SK-N-SH (cell line): ENCODE measurements at regions of chr6 and their contacts with region 1.

Region 1: DNA sequence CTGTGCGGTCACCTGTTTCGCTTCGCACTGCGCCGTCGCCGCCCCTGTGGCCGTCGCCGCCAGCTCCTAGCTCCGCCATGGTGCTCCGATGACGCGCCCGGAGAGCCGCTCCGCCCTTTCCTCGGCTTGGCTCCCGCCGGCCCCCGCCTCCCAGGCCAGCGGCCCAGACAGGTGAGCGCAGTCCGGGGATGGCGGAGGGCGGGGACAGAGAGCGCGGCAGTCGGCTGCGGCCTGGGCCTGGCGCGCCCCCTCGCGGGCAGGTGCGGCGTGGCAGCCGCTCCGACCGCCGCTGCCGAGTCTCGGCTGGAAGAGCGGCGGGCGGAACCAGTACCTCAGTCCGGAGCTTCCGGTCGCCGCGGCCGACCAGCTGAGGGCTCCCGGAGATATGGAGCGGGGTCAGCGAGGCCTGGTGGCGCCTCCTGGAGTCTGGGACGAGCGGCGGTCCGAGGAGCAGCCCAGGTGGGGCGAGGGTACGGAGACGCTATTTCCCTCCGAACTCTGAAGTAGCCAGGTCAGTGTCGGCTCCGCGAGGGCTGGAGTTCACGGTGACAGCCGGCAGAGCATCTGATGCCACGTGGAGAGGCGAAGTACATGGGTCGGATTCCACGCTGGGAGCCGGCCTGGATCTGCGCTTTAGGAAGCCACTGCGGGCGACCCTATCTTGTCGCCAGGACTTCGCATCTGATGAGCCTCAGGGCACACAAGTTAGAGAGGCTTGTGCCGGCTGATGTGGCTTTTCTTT is at the start of gene MAP7:
- DNase-seq: peak; percentile 88
- H3K4me3 ChIP-seq: peak within 1 kb of the TSS; percentile 70 to 77
- H3K27ac ChIP-seq: peak within 1 kb of the TSS in 1 of 2 experiments; percentile 55; a peak in 2 of 4 replicates
- H3K4me1 ChIP-seq: peaks cover 0 to 16% of the 10 kb centered on the region in 2 experiments; a peak in 2 of 4 replicates
- H3K27me3 ChIP-seq: peaks cover 12% of the 10 kb centered on the region; the same call in 1 of the 2 replicates
- CTCF ChIP-seq: peak; percentile 69
- EP300 ChIP-seq: no peak
- RAD21 ChIP-seq: peak; percentile 54
- polyA plus RNA-seq, gene MAP7: 0.76 and 0.97 TPM in 2 replicates

Region 2: GRCh38 chr6:136289579-136290409 is 260.7 kb before region 1 on chr6 and contains the start of gene BCLAF1:
- CTCF ChIA-PET with region 1: interaction called, 10 read pairs
- POLR2A ChIA-PET with region 1: interaction called, 9 read pairs
- DNase-seq: peak; percentile 92
- H3K4me3 ChIP-seq: peak within 1 kb of the TSS; percentile 93 to 98
- H3K27ac ChIP-seq: peak within 1 kb of the TSS; percentile 100
- H3K4me1 ChIP-seq: peaks cover 5 to 20% of the 10 kb centered on the region in 2 experiments; a peak in 3 of 4 replicates
- H3K27me3 ChIP-seq: no peaks in the 10 kb centered on the region
- CTCF ChIP-seq: no peak
- EP300 ChIP-seq: no peak
- RAD21 ChIP-seq: no peak
- polyA plus RNA-seq, gene BCLAF1: 21.9 and 30.4 TPM in 2 replicates

Region 3: GRCh38 chr6:136317021-136317694 is 233.3 kb before region 1 on chr6:
- CTCF ChIA-PET with region 1: interaction called, 10 read pairs
- POLR2A ChIA-PET with region 1: no interaction called
- DNase-seq: peak; percentile 53
- H3K4me3 ChIP-seq: peak overlapping the region in 1 of 2 experiments; percentile 39; a peak in 1 of 4 replicates
- H3K27ac ChIP-seq: no peak overlapping the region
- H3K4me1 ChIP-seq: no peaks in the 10 kb centered on the region
- H3K27me3 ChIP-seq: no peaks in the 10 kb centered on the region; the same call in 1 of the 2 replicates
- CTCF ChIP-seq: peak; percentile 76
- EP300 ChIP-seq: no peak
- RAD21 ChIP-seq: peak; percentile 95

Region 4: DNA sequence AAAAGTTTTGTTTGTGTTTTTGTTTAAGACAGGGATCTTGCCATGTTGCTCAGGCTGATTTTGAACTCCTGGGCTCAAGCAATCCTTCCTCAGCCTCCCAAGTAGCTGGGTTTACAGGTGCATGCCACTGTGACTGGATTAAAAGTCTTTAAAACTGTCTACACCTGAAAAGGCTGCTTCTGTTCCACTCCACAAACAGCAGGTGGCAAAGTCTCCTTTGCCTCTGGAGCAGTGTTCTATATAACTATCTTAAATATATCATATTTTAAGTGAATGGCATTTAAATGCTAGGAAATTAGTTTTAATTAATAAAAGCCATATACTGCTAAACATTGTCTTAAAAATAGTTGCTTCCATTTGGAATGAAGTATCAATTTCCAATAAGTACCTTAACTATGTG is 171.6 kb before region 1 on chr6:
- CTCF ChIA-PET with region 1: interaction called, 17 read pairs
- POLR2A ChIA-PET with region 1: no interaction called
- DNase-seq: no peak
- H3K4me3 ChIP-seq: no peak overlapping the region
- H3K27ac ChIP-seq: no peak overlapping the region
- H3K4me1 ChIP-seq: no peaks in the 10 kb centered on the region
- H3K27me3 ChIP-seq: no peaks in the 10 kb centered on the region
- CTCF ChIP-seq: peak; percentile 23
- EP300 ChIP-seq: no peak
- RAD21 ChIP-seq: peak; percentile 62

Region 5: DNA sequence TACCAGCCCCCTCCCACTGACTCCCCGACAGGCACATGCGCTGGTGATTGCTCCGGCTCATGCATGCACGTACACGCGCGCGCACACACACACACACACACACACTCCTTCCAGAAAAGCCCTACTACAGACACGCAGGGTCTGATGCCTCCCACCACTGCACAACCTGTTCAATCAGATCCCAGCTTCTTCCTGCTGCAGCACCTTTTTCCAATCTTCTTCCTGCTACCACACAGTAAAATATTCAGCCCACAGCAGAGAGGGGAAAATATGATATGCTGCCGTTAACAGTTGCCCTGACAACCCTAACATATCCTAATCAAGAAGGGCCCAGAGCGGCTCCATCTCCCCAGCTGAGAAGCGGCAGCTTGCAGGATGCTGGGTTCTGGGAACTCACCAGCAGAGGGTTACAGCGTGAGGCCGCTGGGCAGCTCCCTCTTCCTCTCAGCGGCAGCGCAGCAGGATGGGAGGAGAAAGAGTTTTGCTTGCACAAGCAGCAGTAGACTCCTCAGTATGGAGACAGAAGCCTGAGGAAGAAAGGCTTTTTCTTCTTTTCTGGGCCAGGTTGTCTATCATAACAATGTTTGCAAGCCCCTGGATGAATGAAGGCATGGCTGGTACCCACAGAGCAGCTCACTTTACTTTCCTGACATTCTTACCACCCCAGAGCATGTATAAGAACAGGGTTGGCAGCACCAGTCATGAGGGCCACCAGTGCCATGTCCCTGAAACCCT is 24.1 kb before region 1 on chr6:
- CTCF ChIA-PET with region 1: interaction called, 51 read pairs
- POLR2A ChIA-PET with region 1: no interaction called
- DNase-seq: peak; percentile 76
- H3K4me3 ChIP-seq: peak overlapping the region in 1 of 2 experiments; percentile 31; a peak in 2 of 4 replicates
- H3K27ac ChIP-seq: peak overlapping the region in 1 of 2 experiments; percentile 94; a peak in 2 of 4 replicates
- H3K4me1 ChIP-seq: peaks cover 0 to 33% of the 10 kb centered on the region in 2 experiments; a peak in 2 of 4 replicates
- H3K27me3 ChIP-seq: no peaks in the 10 kb centered on the region
- CTCF ChIP-seq: peak; percentile 41
- EP300 ChIP-seq: no peak
- RAD21 ChIP-seq: peak; percentile 53

Region 6: GRCh38 chr6:136566007-136566496 is 15.6 kb after region 1 on chr6:
- CTCF ChIA-PET with region 1: interaction called, 34 read pairs
- POLR2A ChIA-PET with region 1: no interaction called
- DNase-seq: no peak
- H3K4me3 ChIP-seq: no peak overlapping the region
- H3K27ac ChIP-seq: no peak overlapping the region
- H3K4me1 ChIP-seq: peaks cover 0 to 6% of the 10 kb centered on the region in 2 experiments; a peak in 2 of 4 replicates
- H3K27me3 ChIP-seq: no peaks in the 10 kb centered on the region
- CTCF ChIP-seq: no peak
- EP300 ChIP-seq: no peak
- RAD21 ChIP-seq: no peak

Region 7: GRCh38 chr6:136831873-136832562 is 281.5 kb after region 1 on chr6:
- CTCF ChIA-PET with region 1: no interaction called
- POLR2A ChIA-PET with region 1: no interaction called
- DNase-seq: no peak
- H3K4me3 ChIP-seq: no peak overlapping the region; a peak in 1 of 4 replicates
- H3K27ac ChIP-seq: no peak overlapping the region
- H3K4me1 ChIP-seq: no peaks in the 10 kb centered on the region
- H3K27me3 ChIP-seq: no peaks in the 10 kb centered on the region
- CTCF ChIP-seq: no peak
- EP300 ChIP-seq: no peak
- RAD21 ChIP-seq: no peak